ENCODE measurements at regions of chr5 and their contacts with region 1.

Region 1: DNA sequence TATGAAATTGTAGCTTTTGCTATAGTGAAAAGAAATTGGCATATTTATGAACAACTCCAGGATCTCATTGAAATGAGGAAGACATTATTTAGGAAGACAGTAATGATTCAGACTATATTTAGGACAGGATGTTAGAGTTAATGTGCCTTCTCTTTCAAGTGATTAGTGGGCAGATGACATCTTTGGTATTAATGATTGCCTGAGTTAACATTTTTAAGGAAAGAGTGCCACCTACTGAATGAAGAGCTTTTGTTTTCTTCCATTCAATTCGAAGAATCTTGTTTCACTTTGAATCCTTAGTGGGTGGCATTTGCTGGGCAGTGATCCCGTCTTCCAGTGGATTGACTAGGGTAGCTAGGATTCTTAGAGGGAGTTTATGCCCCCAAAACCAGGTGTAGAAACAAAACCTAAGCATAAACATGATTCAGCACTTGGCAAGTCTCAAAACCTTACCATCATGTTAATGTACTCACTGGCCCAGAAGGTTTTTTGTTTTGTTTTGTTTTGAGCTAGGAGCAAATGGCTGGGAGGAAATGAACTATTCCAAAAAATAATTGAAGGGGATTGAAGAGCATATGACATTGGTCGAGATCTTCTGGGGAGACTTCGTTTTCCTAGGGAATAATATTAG is 23.2 kb downstream of the MAP3K1 start:
- DNase-seq: no peak
- ATAC-seq: peak; percentile 69
- H3K4me3 ChIP-seq: no peak overlapping the region
- H3K27ac ChIP-seq: no peak overlapping the region
- H3K4me1 ChIP-seq: peaks cover 0 to 2% of the 10 kb centered on the region in 2 donors
- H3K27me3 ChIP-seq: no peaks in the 10 kb centered on the region

Region 2: GRCh38 chr5:56270568-56271392 is 567.7 kb before region 1 on chr5:
- intact Hi-C with region 1: loop called (anchors 2 kb)
- DNase-seq: peak; percentile 89 to 92
- ATAC-seq: peak; percentile 98
- H3K4me3 ChIP-seq: no peak overlapping the region
- H3K27ac ChIP-seq: no peak overlapping the region
- H3K4me1 ChIP-seq: no peaks in the 10 kb centered on the region
- H3K27me3 ChIP-seq: no peaks in the 10 kb centered on the region

Region 3: GRCh38 chr5:56481428-56482357 is 356.8 kb before region 1 on chr5:
- intact Hi-C with region 1: loop called in 1 of 2 experiments (anchors 5 kb)
- DNase-seq: peak in 1 of 2 donors; percentile 71
- ATAC-seq: peak; percentile 26
- H3K4me3 ChIP-seq: peak overlapping the region; percentile 66 to 71
- H3K27ac ChIP-seq: peak overlapping the region; percentile 69 to 94
- H3K4me1 ChIP-seq: peaks cover 0 to 3% of the 10 kb centered on the region in 2 donors
- H3K27me3 ChIP-seq: no peaks in the 10 kb centered on the region

Region 4: GRCh38 chr5:56814963-56815658 is 23.4 kb before region 1 on chr5 and contains the start of gene MAP3K1:
- intact Hi-C with region 1: loop called in 1 of 2 experiments (anchors 2 kb)
- DNase-seq: peak; percentile 87 to 93
- ATAC-seq: peak; percentile 94
- H3K4me3 ChIP-seq: peak within 1 kb of the TSS; percentile 90 to 97
- H3K27ac ChIP-seq: peak within 1 kb of the TSS; percentile 8 to 79
- H3K4me1 ChIP-seq: no peaks in the 10 kb centered on the region
- H3K27me3 ChIP-seq: no peaks in the 10 kb centered on the region
- total RNA-seq, gene MAP3K1: 11.2 to 26.3 TPM